ENCODE measurements at regions of chrX and their contacts with region 1.

Region 1: DNA sequence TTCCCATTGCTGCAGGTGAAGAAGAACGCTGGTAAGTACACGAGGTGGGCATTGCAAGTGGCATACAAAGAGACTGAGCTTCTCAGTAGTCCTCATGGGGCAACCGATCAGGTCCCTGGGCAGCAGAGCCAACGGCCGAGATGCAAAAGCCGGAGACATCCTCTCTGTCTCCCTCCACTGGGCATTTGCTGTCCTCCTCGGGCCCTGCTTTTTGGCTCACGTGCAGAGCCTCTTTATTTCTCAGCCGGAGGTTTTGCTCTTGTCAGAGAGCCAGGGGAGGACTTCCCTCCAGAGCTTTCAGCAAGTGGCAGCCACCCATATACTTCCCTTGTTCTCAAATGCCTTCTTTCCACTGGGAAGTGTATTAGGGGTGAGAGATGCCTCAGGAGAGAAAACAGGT is 18.0 kb downstream of the STARD8 start:
- DNase-seq: peak; percentile 23 to 34
- ATAC-seq: peak in 6 of 8 donors; percentile 32 to 84 (median 57)
- H3K4me3 ChIP-seq: no peak overlapping the region
- H3K27ac ChIP-seq: peak overlapping the region in 3 of 10 donors; percentile 35 to 79 (median 41)
- H3K4me1 ChIP-seq: peaks cover 0 to 8% (median 0%) of the 10 kb centered on the region in 9 donors
- H3K27me3 ChIP-seq: peaks cover 0 to 6% (median 0%) of the 10 kb centered on the region in 7 donors
- CTCF ChIP-seq: peak in 6 of 9 donors; percentile 15 to 49 (median 34)

Region 2: GRCh38 chrX:68599251-68600152 is 66.0 kb before region 1 on chrX:
- intact Hi-C with region 1: loop called in 1 of 10 experiments (anchors 10 kb)
- DNase-seq: no peak
- ATAC-seq: no peak
- H3K4me3 ChIP-seq: no peak overlapping the region
- H3K27ac ChIP-seq: no peak overlapping the region
- H3K4me1 ChIP-seq: no peaks in the 10 kb centered on the region
- H3K27me3 ChIP-seq: no peaks in the 10 kb centered on the region
- CTCF ChIP-seq: peak; percentile 44 to 76 (median 64)